GM12878 (cell line): ENCODE measurements at regions of chr4 and their contacts with region 1.

Region 1: DNA sequence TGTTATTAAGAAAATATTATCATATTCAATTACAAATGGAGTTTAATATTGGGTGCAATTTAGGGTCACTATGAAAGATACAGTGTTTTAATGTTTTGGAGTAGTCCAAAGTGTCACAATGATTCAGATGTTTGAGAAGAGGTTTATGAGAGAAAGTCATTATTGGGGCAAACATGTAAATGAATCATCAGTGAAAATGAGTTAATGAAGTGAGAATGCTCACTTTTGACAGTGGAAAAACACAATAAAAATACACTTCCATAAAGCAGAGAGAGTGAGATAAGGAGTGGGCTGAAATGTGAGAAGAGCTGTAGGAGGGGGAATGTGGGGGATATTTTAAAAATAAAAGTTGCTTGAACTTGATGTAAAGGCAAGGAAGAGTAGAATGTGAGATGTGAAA is 957.1 kb downstream of the PCDH18 start:
- DNase-seq: no peak
- ATAC-seq: no peak
- H3K4me3 ChIP-seq: no peak overlapping the region
- H3K27ac ChIP-seq: no peak overlapping the region
- H3K4me1 ChIP-seq: no peaks in the 10 kb centered on the region
- H3K27me3 ChIP-seq: no peaks in the 10 kb centered on the region
- CTCF ChIP-seq: no peak
- EP300 ChIP-seq: no peak
- POLR2A ChIP-seq: no peak
- RAD21 ChIP-seq: no peak

Region 2: GRCh38 chr4:136562834-136563233 is 12.3 kb before region 1 on chr4:
- CTCF ChIA-PET with region 1: interaction called, 3 read pairs
- POLR2A ChIA-PET with region 1: no interaction called
- RAD21 ChIA-PET with region 1: no interaction called
- SMC1A ChIA-PET with region 1: interaction called, 10 read pairs
- in situ Hi-C with region 1: no loop called
- intact Hi-C with region 1: no loop called
- DNase-seq: no peak
- ATAC-seq: no peak
- H3K4me3 ChIP-seq: no peak overlapping the region
- H3K27ac ChIP-seq: no peak overlapping the region
- H3K4me1 ChIP-seq: no peaks in the 10 kb centered on the region
- H3K27me3 ChIP-seq: no peaks in the 10 kb centered on the region
- CTCF ChIP-seq: no peak
- EP300 ChIP-seq: no peak
- POLR2A ChIP-seq: no peak
- RAD21 ChIP-seq: no peak